ENCODE measurements at regions of chr10 and their contacts with region 1.

Region 1: GRCh38 chr10:80504158-80504811 is 33.4 kb upstream of the SH2D4B start:
- DNase-seq: no peak
- ATAC-seq: no peak
- H3K4me3 Mint-ChIP-seq: no peak overlapping the region
- H3K27ac Mint-ChIP-seq: peak overlapping the region; percentile 46
- H3K4me1 Mint-ChIP-seq: peaks cover 63% of the 10 kb centered on the region
- H3K27me3 Mint-ChIP-seq: no peaks in the 10 kb centered on the region
- CTCF ChIP-seq: no peak

Region 2: DNA sequence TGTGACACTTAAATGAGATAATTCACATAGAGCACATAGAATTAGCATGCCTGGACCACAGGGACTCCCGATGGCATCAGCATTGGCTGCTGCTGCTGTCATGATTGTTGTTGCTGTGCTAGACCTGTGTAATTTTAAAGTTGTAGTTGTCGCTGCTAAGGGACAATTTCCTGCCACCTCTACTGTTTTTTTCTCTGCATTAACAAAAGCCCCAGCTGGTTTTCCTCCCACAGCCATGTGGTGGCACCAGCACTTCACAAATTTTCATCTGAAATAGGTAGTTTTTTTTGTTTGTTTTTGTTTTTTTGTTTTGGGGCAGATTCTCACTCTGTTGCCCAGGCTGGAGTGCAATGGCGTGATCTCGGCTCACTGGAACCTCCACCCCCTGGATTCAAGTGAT is 121.3 kb before region 1 on chr10:
- CTCF ChIA-PET with region 1: interaction called, 210 read pairs
- POLR2A ChIA-PET with region 1: no interaction called
- intact Hi-C with region 1: loop called (anchors 1 kb)
- DNase-seq: no peak
- ATAC-seq: peak; percentile 40
- H3K4me3 Mint-ChIP-seq: no peak overlapping the region
- H3K27ac Mint-ChIP-seq: no peak overlapping the region
- H3K4me1 Mint-ChIP-seq: peaks cover 7% of the 10 kb centered on the region
- H3K27me3 Mint-ChIP-seq: peaks cover 6% of the 10 kb centered on the region
- CTCF ChIP-seq: no peak

Region 3: GRCh38 chr10:80421707-80422536 is 82.4 kb before region 1 on chr10:
- CTCF ChIA-PET with region 1: interaction called, 15 read pairs
- POLR2A ChIA-PET with region 1: no interaction called
- intact Hi-C with region 1: no loop called
- DNase-seq: no peak
- ATAC-seq: peak; percentile 82
- H3K4me3 Mint-ChIP-seq: peak overlapping the region; percentile 24
- H3K27ac Mint-ChIP-seq: peak overlapping the region; percentile 10
- H3K4me1 Mint-ChIP-seq: peaks cover 32% of the 10 kb centered on the region
- H3K27me3 Mint-ChIP-seq: no peaks in the 10 kb centered on the region
- CTCF ChIP-seq: no peak

Region 4: DNA sequence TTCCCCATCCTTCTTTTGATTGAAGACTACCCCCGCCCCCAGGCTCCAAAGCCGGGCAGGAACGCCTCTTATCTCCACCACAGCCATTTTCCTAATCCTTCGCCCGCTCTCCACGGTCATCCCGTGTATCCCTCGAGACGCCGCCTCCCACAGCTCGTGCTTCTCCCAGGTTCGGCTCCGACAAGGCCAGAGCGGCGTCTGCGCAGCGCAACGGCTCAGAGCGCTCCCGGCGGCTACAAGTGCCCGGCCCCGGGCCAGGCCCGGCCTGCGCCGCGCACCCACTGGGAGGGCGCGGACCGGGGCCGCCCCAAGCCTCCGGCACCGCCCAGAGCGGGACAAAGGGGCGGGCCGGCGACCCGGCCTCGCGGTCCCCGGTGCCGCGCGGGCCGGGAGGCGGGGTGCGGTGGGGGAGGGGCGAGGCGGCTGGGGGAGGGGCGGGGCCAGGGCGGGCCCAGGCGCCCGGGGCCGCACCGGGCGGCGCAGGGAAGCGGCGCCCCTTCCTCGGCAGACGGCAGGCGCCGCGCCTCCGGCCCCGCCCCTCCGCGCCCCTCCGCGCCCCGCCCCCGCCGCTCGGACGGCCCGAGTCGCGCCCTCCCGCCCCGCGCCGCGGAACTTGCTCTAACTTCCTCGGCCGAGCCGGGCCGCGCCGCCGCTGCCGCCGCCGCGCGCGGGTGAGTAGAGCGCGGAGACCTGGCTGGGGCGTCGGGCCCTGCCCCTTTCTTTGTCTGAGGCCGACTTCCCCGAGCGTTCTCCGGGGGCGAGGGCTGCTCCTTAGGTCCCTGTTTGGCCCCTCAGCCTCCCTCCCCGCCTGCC is 50.4 kb before region 1 on chr10 and contains the start of gene TSPAN14:
- CTCF ChIA-PET with region 1: interaction called, 24 read pairs
- POLR2A ChIA-PET with region 1: interaction called, 9 read pairs
- intact Hi-C with region 1: loop called (anchors 1 kb)
- DNase-seq: peak; percentile 73
- ATAC-seq: peak; percentile 77
- H3K4me3 Mint-ChIP-seq: peak within 1 kb of the TSS; percentile 95
- H3K27ac Mint-ChIP-seq: peak within 1 kb of the TSS; percentile 89
- H3K4me1 Mint-ChIP-seq: peaks cover 50% of the 10 kb centered on the region
- H3K27me3 Mint-ChIP-seq: no peaks in the 10 kb centered on the region
- CTCF ChIP-seq: no peak
- total RNA-seq, gene TSPAN14: 18.9 and 20.7 TPM in 2 replicates

Region 5: DNA sequence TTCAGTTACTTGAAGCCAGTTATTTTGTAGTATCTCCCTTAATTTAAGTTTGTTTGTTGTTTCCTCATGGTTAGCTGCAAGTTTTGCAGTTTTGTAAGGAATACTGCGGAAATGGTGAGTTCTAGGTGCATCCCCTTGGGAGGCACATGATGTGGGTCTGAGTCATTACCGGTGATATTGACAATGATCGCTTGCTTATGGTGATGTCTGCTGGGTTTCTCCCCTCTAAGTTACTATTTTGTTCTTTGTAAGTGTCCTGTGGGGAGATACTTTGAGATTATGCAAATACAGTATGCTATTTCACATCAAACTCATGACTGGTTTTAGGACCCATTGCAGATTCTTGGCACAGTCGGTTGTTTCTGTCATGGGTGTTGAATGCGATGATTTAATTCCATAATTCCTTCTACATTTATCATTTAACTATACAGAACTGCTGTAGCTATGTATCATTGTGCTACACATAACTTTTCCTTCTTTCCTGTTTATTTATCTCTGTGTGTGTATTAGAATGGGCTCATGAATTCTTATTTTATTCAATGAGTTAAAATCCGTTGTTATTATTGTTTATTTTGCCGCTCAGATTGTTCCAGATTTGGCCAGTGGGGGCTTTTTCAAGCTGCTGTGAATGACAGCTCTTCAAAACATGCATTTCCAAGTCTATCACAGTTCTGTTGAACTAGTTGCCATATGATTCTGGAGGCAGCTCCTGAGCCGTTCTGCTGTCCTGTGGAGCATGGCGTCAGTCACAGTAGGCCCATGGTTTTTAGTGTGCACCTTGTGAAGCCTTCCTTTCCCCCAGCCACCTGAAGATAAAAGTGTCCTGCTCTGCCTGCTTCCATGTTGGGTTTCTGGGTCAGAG is 31.8 kb before region 1 on chr10:
- CTCF ChIA-PET with region 1: interaction called, 12 read pairs
- POLR2A ChIA-PET with region 1: interaction called, 13 read pairs
- intact Hi-C with region 1: loop called (anchors 1 kb)
- DNase-seq: no peak
- ATAC-seq: peak; percentile 88
- H3K4me3 Mint-ChIP-seq: peak overlapping the region; percentile 44
- H3K27ac Mint-ChIP-seq: peak overlapping the region; percentile 90
- H3K4me1 Mint-ChIP-seq: peaks cover 65% of the 10 kb centered on the region
- H3K27me3 Mint-ChIP-seq: no peaks in the 10 kb centered on the region
- CTCF ChIP-seq: no peak

Measured in activated B cell treated with CpG ODN at 0.5 μM for 24 hours (primary cell).